ENCODE measurements at regions of chr13 and their contacts with region 1.

Region 1: GRCh38 chr13:65613004-65613403 is 1617.1 kb downstream of the PCDH9 start:
- DNase-seq: no peak
- ATAC-seq: no peak
- H3K4me3 ChIP-seq: no peak overlapping the region
- H3K4me3 Mint-ChIP-seq: no peak overlapping the region
- H3K27ac ChIP-seq: no peak overlapping the region
- H3K27ac Mint-ChIP-seq: no peak overlapping the region
- H3K4me1 ChIP-seq: no peaks in the 10 kb centered on the region
- H3K4me1 Mint-ChIP-seq: no peaks in the 10 kb centered on the region
- H3K27me3 ChIP-seq: no peaks in the 10 kb centered on the region
- H3K27me3 Mint-ChIP-seq: no peaks in the 10 kb centered on the region

Region 2: GRCh38 chr13:65585346-65585745 is 27.7 kb before region 1 on chr13:
- CTCF ChIA-PET with region 1: no interaction called
- POLR2A ChIA-PET with region 1: no interaction called
- intact Hi-C with region 1: no loop called
- DNase-seq: no peak
- ATAC-seq: no peak
- H3K4me3 ChIP-seq: no peak overlapping the region
- H3K4me3 Mint-ChIP-seq: no peak overlapping the region
- H3K27ac ChIP-seq: no peak overlapping the region
- H3K27ac Mint-ChIP-seq: no peak overlapping the region
- H3K4me1 ChIP-seq: no peaks in the 10 kb centered on the region
- H3K4me1 Mint-ChIP-seq: no peaks in the 10 kb centered on the region
- H3K27me3 ChIP-seq: no peaks in the 10 kb centered on the region
- H3K27me3 Mint-ChIP-seq: no peaks in the 10 kb centered on the region

Region 3: DNA sequence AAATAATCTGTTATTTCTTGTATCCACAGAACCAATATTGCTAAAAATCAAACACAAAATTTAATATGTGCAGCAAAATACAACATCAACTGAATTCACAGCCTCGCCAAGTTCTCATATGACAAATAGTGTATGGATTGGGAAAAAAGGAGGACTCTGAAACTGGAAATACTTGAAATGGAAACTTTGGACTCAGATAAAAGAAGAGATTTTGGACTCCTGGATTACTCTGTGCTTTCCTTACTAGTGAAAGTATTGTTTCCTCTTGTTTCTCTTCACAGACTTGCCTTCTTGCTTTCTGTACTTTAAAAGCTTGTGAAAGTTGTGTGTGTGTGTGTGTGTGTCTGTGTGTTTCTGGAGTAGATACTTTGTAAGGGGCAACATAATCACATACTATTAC is 20.8 kb after region 1 on chr13:
- CTCF ChIA-PET with region 1: no interaction called
- POLR2A ChIA-PET with region 1: no interaction called
- intact Hi-C with region 1: loop called in 1 of 2 experiments (anchors 1 kb)
- DNase-seq: no peak
- ATAC-seq: no peak
- H3K4me3 ChIP-seq: no peak overlapping the region
- H3K4me3 Mint-ChIP-seq: no peak overlapping the region
- H3K27ac ChIP-seq: no peak overlapping the region
- H3K27ac Mint-ChIP-seq: no peak overlapping the region
- H3K4me1 ChIP-seq: no peaks in the 10 kb centered on the region
- H3K4me1 Mint-ChIP-seq: no peaks in the 10 kb centered on the region
- H3K27me3 ChIP-seq: no peaks in the 10 kb centered on the region
- H3K27me3 Mint-ChIP-seq: no peaks in the 10 kb centered on the region

Region 4: DNA sequence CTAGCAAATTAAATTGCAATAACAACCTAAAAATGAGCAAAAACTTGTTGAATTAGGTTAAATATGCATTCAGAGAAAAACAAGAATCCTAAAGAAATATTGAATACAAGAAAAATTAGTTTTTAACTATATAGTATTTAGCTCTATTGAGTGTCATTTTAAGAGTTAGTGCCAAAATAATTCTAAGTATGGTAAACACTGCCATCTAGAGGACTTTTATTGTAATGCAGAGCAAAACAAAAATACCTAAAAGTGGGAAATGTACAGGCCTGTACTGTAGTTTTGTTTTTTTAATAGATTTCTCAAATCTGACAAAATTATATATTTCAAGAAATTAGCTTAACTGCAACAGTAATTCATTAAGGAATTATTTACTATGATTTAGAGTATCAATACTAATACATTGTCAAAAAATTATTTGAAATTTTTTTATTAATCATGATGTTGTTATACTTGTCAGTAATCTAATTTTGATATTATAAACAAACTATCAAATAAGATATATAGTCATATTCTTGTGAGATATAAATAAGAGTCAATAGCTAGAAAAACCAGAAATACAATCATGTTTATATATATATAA is 1625.4 kb after region 1 on chr13:
- CTCF ChIA-PET with region 1: no interaction called
- POLR2A ChIA-PET with region 1: no interaction called
- intact Hi-C with region 1: loop called in 1 of 2 experiments (anchors 5 kb)
- DNase-seq: peak in 6 of 9 donors; percentile 11 to 51 (median 39)
- ATAC-seq: peak; percentile 78
- H3K4me3 ChIP-seq: no peak overlapping the region
- H3K4me3 Mint-ChIP-seq: no peak overlapping the region
- H3K27ac ChIP-seq: no peak overlapping the region
- H3K27ac Mint-ChIP-seq: no peak overlapping the region
- H3K4me1 ChIP-seq: no peaks in the 10 kb centered on the region
- H3K4me1 Mint-ChIP-seq: no peaks in the 10 kb centered on the region
- H3K27me3 ChIP-seq: no peaks in the 10 kb centered on the region
- H3K27me3 Mint-ChIP-seq: peaks cover 0 to 5% (median 0%) of the 10 kb centered on the region in 5 donors

Measured in naive thymus-derived CD4-positive, alpha-beta T cell (primary cell).